Right ventricle myocardium superior (tissue), 1 donor: ENCODE measurements at regions of chr11 and their contacts with region 1.

Region 1: GRCh38 chr11:128884703-128885338 is 6.3 kb upstream of the KCNJ5 start:
- DNase-seq: peak; percentile 51
- ATAC-seq: peak; percentile 92

Region 2: DNA sequence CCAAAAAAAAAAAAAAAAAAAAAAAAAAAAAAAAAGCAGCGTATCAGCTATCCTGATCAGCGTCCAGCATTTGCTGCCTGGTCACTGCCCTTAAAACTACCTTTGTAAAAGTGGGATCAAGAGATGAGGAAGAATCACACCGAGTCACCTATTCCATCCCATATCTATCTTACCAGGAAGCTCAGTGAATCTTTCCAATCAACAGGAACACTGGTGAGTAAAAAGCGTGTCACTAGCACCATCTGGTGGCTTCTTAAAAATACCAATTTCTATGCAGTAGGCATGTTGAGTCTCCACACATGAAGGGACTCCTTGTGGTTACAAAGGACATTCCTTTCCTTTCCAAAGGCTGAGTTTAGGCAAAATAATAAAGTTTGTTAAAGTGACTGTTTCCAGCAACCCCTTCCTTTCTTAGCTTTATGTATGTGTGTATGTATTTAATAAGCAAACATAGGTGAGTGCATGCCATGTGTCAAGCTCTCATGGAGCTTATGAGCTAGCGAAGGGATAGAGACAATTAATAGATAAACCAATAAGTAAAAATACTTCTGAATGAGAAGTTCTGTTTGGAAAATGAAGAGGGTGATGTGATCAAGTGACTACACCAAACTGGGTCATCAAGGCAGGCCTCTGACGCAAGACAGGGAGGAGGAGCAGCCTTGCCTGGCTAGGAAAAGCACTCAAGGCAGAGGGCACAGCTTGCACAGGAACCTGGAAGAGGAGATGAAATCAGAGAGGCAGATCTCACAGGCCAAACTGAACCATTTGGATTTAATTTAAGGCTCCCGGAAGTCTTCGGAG is 71.8 kb after region 1 on chr11:
- intact Hi-C with region 1: loop called (anchors 2 kb)
- DNase-seq: no peak
- ATAC-seq: peak; percentile 88